GM12878 (cell line): ENCODE measurements at regions of chr6 and their contacts with region 1.

Region 1: DNA sequence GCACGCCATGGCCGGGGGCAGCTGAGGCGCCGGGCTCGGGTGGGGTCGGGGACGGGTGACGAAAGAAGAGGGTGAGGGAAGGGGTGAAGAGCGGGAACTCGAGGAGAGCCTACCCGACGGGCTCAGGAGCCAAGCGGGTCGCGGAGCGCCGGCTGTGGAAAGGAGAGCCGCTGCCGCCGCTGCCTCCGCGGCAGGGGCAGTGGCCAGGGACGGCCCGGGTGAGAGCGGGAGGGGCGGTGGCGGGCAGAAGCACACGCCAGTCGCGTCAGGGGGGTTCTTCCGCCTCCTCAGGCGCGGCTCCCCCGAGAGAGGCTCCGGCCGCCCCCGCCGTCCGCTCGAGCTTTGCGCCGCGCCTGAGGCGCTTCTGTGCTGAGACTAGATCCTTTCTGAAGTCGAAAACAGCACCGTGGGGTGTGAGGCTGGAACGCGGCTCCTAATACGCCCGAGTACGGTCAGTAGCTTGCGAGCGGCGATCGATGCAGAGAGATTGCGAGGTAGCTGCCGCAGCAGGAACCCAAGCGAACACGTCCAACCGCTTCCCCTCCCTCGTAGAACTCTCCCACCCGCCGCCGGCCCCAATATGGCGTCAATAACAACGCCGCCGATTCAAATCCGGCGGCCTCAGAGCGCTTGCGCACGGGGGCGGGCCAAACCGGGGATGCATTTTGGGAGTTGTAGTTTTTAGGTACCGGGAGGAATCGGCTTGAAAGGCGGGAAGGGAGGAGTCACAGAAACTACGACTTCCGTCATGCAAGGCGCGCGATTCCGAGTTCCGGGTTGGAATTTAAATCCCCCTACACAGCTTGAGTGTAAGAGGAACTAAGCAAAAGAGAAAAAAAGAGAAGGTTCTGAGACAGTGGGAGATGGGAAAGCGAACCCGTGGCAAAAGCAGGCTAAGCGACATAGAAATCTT is at the start of gene AKIRIN2:
- DNase-seq: peak; percentile 97
- ATAC-seq: peak; percentile 73
- H3K4me3 ChIP-seq: peak within 1 kb of the TSS; percentile 96
- H3K27ac ChIP-seq: peak within 1 kb of the TSS; percentile 97
- H3K4me1 ChIP-seq: peaks cover 33% of the 10 kb centered on the region
- H3K27me3 ChIP-seq: no peaks in the 10 kb centered on the region
- CTCF ChIP-seq: no peak
- EP300 ChIP-seq: no peak
- POLR2A ChIP-seq: peak; percentile 94
- RAD21 ChIP-seq: no peak
- polyA plus RNA-seq, gene AKIRIN2: 12.7 to 16.8 TPM

Region 2: GRCh38 chr6:86848986-86849385 is 852.9 kb before region 1 on chr6:
- CTCF ChIA-PET with region 1: no interaction called
- POLR2A ChIA-PET with region 1: no interaction called
- RAD21 ChIA-PET with region 1: no interaction called
- SMC1A ChIA-PET with region 1: no interaction called
- in situ Hi-C with region 1: no loop called
- intact Hi-C with region 1: no loop called
- DNase-seq: no peak
- ATAC-seq: no peak
- H3K4me3 ChIP-seq: no peak overlapping the region
- H3K27ac ChIP-seq: no peak overlapping the region
- H3K4me1 ChIP-seq: no peaks in the 10 kb centered on the region
- H3K27me3 ChIP-seq: no peaks in the 10 kb centered on the region
- CTCF ChIP-seq: no peak
- EP300 ChIP-seq: no peak
- POLR2A ChIP-seq: no peak
- RAD21 ChIP-seq: no peak

Region 3: DNA sequence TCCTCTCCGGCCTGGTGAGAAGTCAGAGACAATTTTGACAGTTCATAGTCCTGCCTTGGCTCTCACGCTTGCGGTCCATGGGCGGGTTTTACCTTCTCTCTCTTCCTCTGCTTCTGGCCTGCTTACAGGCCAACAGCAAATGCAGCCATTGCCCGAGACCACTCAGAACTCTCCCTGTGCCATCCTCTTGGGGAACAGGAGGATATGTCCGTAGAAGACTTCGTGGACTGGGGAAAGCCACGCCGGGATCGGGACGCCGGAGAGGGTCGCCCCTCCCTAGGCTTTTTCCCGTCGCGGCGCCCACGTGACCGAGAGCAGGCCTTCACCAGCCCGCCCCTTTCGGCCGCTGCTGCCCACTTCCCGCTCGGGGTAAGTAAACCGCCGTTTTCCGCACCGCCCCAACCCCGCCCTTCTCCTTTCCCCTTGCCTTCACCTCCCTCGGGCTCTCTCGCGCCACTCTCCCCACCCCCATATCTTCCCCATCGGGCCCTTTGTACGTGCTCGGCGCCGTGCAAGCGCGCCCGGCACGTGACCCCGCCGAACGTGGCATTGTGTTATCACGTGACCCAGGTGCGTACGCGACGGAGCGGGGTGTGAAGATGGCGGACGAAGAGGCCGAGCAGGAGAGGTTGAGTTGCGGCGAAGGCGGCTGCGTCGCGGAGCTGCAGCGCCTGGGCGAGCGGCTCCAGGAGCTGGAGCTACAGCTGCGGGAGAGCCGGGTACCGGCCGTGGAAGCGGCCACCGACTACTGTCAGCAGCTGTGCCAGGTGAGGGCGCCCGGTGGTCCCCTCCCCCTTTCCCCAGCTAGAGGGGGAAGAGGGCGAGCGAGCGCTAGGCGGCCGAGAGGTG is 546.7 kb before region 1 on chr6 and contains the start of gene ZNF292:
- CTCF ChIA-PET with region 1: no interaction called
- POLR2A ChIA-PET with region 1: interaction called, 3 read pairs
- RAD21 ChIA-PET with region 1: no interaction called
- SMC1A ChIA-PET with region 1: no interaction called
- in situ Hi-C with region 1: no loop called
- intact Hi-C with region 1: loop called (anchors 10 kb)
- DNase-seq: peak; percentile 96
- ATAC-seq: peak; percentile 85
- H3K4me3 ChIP-seq: peak within 1 kb of the TSS; percentile 96
- H3K27ac ChIP-seq: peak within 1 kb of the TSS; percentile 92
- H3K4me1 ChIP-seq: peaks cover 3% of the 10 kb centered on the region; the same call in 1 of the 2 replicates
- H3K27me3 ChIP-seq: no peaks in the 10 kb centered on the region
- CTCF ChIP-seq: no peak; a peak in 2 of 6 replicates
- EP300 ChIP-seq: peak in 1 of 2 experiments; percentile 73; a peak in 2 of 4 replicates
- POLR2A ChIP-seq: peak; percentile 94
- RAD21 ChIP-seq: peak; percentile 25; the same call in 1 of the 2 replicates
- polyA plus RNA-seq, gene ZNF292: 11.1 to 20.9 TPM

Region 4: DNA sequence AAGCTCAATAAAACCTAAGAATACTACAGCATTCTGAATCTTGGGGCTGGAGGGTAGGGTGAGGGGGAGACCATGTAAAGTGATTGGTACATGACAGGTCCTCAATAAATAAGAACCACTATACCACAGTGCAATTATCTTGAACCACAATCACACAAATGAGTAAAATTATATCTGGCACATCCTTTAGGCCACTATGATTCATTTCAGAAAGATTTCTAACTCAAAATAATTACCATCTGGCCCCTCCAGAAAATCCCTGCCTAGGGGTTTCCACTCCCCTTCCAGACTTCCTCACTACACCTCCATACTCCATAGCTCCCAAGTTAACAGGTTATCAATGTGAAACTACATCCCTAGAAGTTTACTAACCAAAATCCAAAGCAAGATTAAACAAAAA is 19.6 kb before region 1 on chr6:
- CTCF ChIA-PET with region 1: interaction called, 11 read pairs
- POLR2A ChIA-PET with region 1: interaction called, 28 read pairs
- RAD21 ChIA-PET with region 1: interaction called, 54 read pairs
- SMC1A ChIA-PET with region 1: interaction called, 83 read pairs
- in situ Hi-C with region 1: no loop called
- intact Hi-C with region 1: no loop called
- DNase-seq: no peak
- ATAC-seq: peak; percentile 82
- H3K4me3 ChIP-seq: no peak overlapping the region
- H3K27ac ChIP-seq: peak overlapping the region; percentile 70
- H3K4me1 ChIP-seq: peaks cover 20% of the 10 kb centered on the region
- H3K27me3 ChIP-seq: no peaks in the 10 kb centered on the region
- CTCF ChIP-seq: no peak
- EP300 ChIP-seq: peak in 1 of 2 experiments; percentile 69; a peak in 1 of 4 replicates
- POLR2A ChIP-seq: no peak
- RAD21 ChIP-seq: no peak

Region 5: GRCh38 chr6:87731818-87732661 is 30.1 kb after region 1 on chr6:
- CTCF ChIA-PET with region 1: interaction called, 4 read pairs
- POLR2A ChIA-PET with region 1: interaction called, 8 read pairs
- RAD21 ChIA-PET with region 1: interaction called, 15 read pairs
- SMC1A ChIA-PET with region 1: interaction called, 14 read pairs
- in situ Hi-C with region 1: no loop called
- intact Hi-C with region 1: loop called (anchors 5 kb)
- DNase-seq: peak; percentile 71
- ATAC-seq: peak; percentile 87
- H3K4me3 ChIP-seq: peak overlapping the region; percentile 9; the same call in 1 of the 2 replicates
- H3K27ac ChIP-seq: peak overlapping the region; percentile 89
- H3K4me1 ChIP-seq: peaks cover 37% of the 10 kb centered on the region
- H3K27me3 ChIP-seq: no peaks in the 10 kb centered on the region
- CTCF ChIP-seq: no peak
- EP300 ChIP-seq: peak in 1 of 2 experiments; percentile 27; a peak in 1 of 4 replicates
- POLR2A ChIP-seq: 0 out of 2 replicates have a peak, but pooled peaks have one; percentile 22
- RAD21 ChIP-seq: 0 out of 2 replicates have a peak, but pooled peaks have one; percentile 2

Region 6: DNA sequence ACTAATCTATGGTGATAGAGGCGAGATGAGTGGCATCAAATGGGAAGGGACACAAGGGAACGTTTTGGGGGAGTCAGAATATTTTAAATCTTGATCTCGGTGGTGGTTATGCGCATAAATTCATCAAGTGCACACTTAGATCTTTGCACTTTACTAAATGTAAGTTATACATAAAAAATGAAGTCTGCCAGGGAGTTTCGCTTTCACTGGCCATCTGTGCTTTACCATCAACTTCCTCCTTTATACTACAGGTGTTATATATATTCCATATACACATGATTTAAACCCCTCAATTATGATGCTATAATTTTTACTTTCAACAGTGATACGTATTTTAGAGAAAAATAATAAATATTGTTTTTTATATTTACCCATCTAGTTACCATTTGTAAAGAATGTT is 97.7 kb after region 1 on chr6:
- CTCF ChIA-PET with region 1: interaction called, 5 read pairs
- POLR2A ChIA-PET with region 1: interaction called, 8 read pairs
- RAD21 ChIA-PET with region 1: interaction called, 31 read pairs
- SMC1A ChIA-PET with region 1: interaction called, 41 read pairs
- in situ Hi-C with region 1: no loop called
- intact Hi-C with region 1: loop called (anchors 2 kb)
- DNase-seq: no peak
- ATAC-seq: peak; percentile 29
- H3K4me3 ChIP-seq: no peak overlapping the region
- H3K27ac ChIP-seq: peak overlapping the region; percentile 36; the same call in 1 of the 2 replicates
- H3K4me1 ChIP-seq: peaks cover 34% of the 10 kb centered on the region
- H3K27me3 ChIP-seq: no peaks in the 10 kb centered on the region
- CTCF ChIP-seq: no peak
- EP300 ChIP-seq: no peak
- POLR2A ChIP-seq: no peak
- RAD21 ChIP-seq: no peak

Region 7: GRCh38 chr6:87976616-87977015 is 274.7 kb after region 1 on chr6:
- CTCF ChIA-PET with region 1: no interaction called
- POLR2A ChIA-PET with region 1: no interaction called
- RAD21 ChIA-PET with region 1: no interaction called
- SMC1A ChIA-PET with region 1: no interaction called
- in situ Hi-C with region 1: no loop called
- intact Hi-C with region 1: no loop called
- DNase-seq: no peak
- ATAC-seq: no peak
- H3K4me3 ChIP-seq: no peak overlapping the region
- H3K27ac ChIP-seq: no peak overlapping the region
- H3K4me1 ChIP-seq: no peaks in the 10 kb centered on the region
- H3K27me3 ChIP-seq: no peaks in the 10 kb centered on the region
- CTCF ChIP-seq: no peak
- EP300 ChIP-seq: no peak
- POLR2A ChIP-seq: no peak
- RAD21 ChIP-seq: no peak

Region 8: DNA sequence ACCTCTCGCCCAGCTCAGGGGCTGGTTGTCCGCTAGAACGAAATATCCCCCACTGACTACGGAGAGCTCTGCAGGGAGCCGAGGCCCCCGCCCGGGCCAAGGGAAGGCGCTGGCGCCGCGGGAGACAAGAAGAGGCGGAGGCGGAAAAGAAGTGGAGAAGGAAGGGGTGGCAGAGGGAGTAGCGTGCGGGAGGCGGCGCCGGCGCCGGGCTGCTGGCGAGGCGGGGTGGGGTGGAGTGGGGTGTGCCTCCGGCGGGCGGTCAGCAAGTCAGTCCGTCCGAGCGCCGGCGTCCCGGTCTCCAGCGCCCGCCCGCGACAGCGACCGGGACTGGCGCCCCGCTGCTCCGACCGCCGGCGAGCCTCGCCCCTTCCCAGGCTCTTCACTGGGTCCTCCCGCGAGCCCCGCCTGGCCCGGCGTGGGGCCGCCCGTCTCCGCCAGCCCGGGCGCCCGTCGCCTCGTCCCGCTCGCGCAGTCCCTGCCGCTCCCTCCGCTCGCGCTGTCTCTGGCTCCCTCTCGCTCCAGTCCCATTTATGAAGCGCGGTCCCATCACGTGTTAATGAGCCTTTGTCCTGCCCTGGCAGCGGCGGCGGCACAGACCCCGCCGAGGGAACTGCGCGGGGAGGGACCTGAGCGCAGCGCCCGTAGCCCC is 464.0 kb after region 1 on chr6 and contains the start of gene CNR1:
- CTCF ChIA-PET with region 1: interaction called, 3 read pairs
- POLR2A ChIA-PET with region 1: interaction called, 3 read pairs
- RAD21 ChIA-PET with region 1: interaction called, 10 read pairs
- SMC1A ChIA-PET with region 1: no interaction called
- in situ Hi-C with region 1: no loop called
- intact Hi-C with region 1: loop called (anchors 10 kb)
- DNase-seq: no peak
- ATAC-seq: peak; percentile 76
- H3K4me3 ChIP-seq: peak within 1 kb of the TSS; percentile 94
- H3K27ac ChIP-seq: no peak within 1 kb of the TSS; the same call in 1 of the 2 replicates
- H3K4me1 ChIP-seq: no peaks in the 10 kb centered on the region
- H3K27me3 ChIP-seq: 0 out of 4 replicates have a peak, but pooled peaks cover 0 to 6% of the 10 kb centered on the region in 2 experiments
- CTCF ChIP-seq: peak; percentile 24 to 47 (median 33); a peak in 4 of 6 replicates
- EP300 ChIP-seq: no peak
- POLR2A ChIP-seq: peak; percentile 77
- RAD21 ChIP-seq: no peak; the same call in 1 of the 2 replicates
- polyA plus RNA-seq, gene CNR1: 2.2 to 3.1 TPM